Activated CD8-positive, alpha-beta T cell treated with anti-CD3 and anti-CD28 coated beads, Interleukin-2, amount 10 ng/mL, durations not matched to agents 7 days and 5 days (primary cell): ENCODE measurements at regions of chr6 and their contacts with region 1.

Region 1: DNA sequence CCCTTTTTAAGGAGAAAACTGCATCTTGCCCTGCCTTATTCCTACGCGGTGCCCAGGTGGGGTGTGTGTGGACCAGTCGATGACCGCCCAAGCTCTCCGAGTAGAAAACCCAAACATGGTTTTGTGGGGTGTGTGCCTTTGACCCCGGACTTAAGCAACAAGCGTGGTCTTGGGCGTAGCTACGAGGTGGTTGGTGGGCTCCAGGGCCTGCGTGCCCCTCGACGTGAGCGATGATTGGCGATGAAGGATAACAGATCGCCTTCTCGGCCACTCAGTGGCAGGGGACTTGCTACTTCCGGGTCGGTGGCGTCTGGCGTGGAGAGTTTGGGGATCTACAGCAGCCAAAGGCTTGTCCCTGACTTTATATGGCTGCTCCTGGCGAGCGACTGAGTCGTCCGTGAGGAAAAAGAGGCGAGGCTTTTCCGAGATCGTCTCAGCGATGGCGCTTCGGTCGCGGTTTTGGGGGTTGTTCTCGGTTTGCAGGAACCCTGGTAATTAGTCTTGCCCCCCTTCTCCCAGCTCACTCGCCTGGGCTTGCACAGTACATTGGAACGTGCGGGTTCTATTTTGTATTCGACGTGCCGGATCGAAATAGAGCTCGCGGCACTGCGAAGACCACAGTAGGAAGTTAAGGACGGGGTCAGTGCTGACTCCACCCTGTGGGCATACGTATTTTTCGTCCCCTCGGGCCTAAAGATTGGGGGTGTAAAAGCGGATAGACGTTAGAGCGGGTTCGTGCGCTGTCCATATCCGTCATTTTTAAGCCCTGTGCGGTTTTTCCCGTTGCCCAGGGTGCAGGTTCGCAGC is at the start of gene MRPL18:
- DNase-seq: peak; percentile 96
- ATAC-seq: peak; percentile 85
- H3K4me3 Mint-ChIP-seq: peak within 1 kb of the TSS; percentile 93
- H3K27ac Mint-ChIP-seq: peak within 1 kb of the TSS; percentile 96
- H3K4me1 Mint-ChIP-seq: peaks cover 59% of the 10 kb centered on the region
- H3K27me3 Mint-ChIP-seq: no peaks in the 10 kb centered on the region
- total RNA-seq, gene MRPL18: 85.4 to 91.3 TPM

Region 2: DNA sequence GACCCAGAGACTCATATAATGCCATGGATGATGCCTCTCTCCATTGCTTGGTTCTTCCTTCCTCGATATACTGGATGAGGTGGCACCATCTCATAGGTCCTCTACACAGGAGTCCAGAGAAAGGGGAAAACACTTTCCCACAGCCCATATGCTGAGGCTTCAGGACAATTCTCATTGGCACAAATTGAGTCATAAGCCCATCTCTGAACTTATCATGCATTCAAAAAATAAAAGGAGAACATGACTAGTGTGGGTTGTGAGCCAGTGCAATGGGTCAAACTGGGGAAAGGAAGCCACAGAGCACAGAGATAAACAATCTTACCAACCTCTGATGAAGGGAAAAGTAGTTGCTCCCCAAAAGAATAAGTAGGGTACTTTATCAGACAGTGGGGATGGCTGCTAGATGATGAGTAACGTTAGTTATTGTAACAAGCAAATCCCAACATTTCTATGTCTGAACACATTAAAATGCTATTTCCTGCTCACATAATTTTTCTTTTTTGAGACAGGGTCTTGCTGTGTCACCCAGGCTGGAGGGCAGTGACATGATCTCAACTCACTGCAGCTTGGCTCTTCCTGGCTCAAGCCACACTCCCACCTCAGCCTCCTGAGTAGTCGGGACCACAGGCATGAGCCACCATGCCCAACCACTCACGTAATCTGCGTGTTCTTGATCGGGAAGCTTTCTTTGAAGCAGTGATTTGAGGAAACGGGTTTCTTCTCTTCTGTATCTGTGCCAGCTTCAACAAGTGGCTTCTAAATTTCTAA is 124.3 kb before region 1 on chr6:
- CTCF ChIA-PET with region 1: no interaction called
- POLR2A ChIA-PET with region 1: no interaction called
- DNase-seq: no peak
- ATAC-seq: no peak
- H3K4me3 Mint-ChIP-seq: no peak overlapping the region
- H3K27ac Mint-ChIP-seq: no peak overlapping the region
- H3K4me1 Mint-ChIP-seq: no peaks in the 10 kb centered on the region
- H3K27me3 Mint-ChIP-seq: no peaks in the 10 kb centered on the region

Region 3: GRCh38 chr6:159693128-159693893 is 97.0 kb before region 1 on chr6 and contains the start of gene SOD2:
- CTCF ChIA-PET with region 1: interaction called, 21 read pairs
- POLR2A ChIA-PET with region 1: interaction called, 26 read pairs
- DNase-seq: peak; percentile 85
- ATAC-seq: peak; percentile 81
- H3K4me3 Mint-ChIP-seq: peak within 1 kb of the TSS; percentile 94
- H3K27ac Mint-ChIP-seq: peak within 1 kb of the TSS; percentile 95
- H3K4me1 Mint-ChIP-seq: peaks cover 37% of the 10 kb centered on the region
- H3K27me3 Mint-ChIP-seq: no peaks in the 10 kb centered on the region
- total RNA-seq, gene SOD2: 59.1 to 66.4 TPM

Region 4: GRCh38 chr6:159726918-159727716 is 63.2 kb before region 1 on chr6 and contains the start of gene WTAP:
- CTCF ChIA-PET with region 1: interaction called, 5 read pairs
- POLR2A ChIA-PET with region 1: interaction called, 30 read pairs
- DNase-seq: peak; percentile 98
- ATAC-seq: peak; percentile 82
- H3K4me3 Mint-ChIP-seq: peak within 1 kb of the TSS; percentile 93
- H3K27ac Mint-ChIP-seq: peak within 1 kb of the TSS; percentile 98
- H3K4me1 Mint-ChIP-seq: peaks cover 51% of the 10 kb centered on the region
- H3K27me3 Mint-ChIP-seq: no peaks in the 10 kb centered on the region
- total RNA-seq, gene WTAP: 111 to 113 TPM

Region 5: DNA sequence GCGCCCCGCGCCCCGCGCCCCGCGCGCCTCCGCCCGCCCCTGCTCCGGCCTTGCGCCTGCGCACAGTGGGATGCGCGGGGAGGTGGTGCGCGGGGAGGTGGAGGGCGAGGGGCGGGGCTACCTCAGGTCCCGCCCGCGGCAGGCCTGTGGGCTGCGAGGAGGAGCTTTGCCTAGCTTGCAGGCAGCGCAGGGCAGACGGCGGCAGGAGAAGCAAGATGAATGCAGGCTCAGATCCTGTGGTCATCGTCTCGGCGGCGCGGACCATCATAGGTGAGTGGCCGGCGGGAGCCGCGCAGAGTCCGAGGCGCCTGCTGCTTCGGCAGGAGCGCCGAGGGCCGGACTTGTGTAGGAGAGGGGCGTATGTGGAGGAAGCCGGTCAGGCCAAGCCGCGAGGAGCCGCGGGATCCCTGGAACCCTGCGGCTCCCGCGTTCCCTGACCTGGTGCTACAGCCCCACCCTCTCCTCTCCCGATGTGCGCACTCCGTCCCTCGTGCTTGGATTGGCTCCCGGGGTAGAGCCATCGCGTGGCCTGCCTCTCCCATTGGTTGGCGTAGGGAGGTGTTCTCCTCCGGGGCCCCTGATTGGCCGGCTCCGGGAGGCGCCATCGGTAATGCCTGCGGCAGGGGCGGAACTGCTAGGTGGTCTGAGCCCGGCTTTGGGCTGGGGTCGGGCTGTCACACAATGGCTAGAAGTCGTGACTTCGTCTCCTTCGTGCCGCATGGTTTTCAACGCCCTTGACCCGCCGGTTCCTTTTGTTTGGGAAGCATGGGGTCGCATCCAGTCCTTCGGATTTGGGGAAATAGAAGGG is 28.3 kb before region 1 on chr6 and contains the start of gene ACAT2:
- CTCF ChIA-PET with region 1: interaction called, 3 read pairs
- POLR2A ChIA-PET with region 1: interaction called, 33 read pairs
- DNase-seq: peak; percentile 95
- ATAC-seq: peak; percentile 97
- H3K4me3 Mint-ChIP-seq: peak within 1 kb of the TSS; percentile 94
- H3K27ac Mint-ChIP-seq: peak within 1 kb of the TSS; percentile 96
- H3K4me1 Mint-ChIP-seq: peaks cover 39% of the 10 kb centered on the region
- H3K27me3 Mint-ChIP-seq: no peaks in the 10 kb centered on the region
- total RNA-seq, gene ACAT2: 84.4 to 89.2 TPM

Region 6: DNA sequence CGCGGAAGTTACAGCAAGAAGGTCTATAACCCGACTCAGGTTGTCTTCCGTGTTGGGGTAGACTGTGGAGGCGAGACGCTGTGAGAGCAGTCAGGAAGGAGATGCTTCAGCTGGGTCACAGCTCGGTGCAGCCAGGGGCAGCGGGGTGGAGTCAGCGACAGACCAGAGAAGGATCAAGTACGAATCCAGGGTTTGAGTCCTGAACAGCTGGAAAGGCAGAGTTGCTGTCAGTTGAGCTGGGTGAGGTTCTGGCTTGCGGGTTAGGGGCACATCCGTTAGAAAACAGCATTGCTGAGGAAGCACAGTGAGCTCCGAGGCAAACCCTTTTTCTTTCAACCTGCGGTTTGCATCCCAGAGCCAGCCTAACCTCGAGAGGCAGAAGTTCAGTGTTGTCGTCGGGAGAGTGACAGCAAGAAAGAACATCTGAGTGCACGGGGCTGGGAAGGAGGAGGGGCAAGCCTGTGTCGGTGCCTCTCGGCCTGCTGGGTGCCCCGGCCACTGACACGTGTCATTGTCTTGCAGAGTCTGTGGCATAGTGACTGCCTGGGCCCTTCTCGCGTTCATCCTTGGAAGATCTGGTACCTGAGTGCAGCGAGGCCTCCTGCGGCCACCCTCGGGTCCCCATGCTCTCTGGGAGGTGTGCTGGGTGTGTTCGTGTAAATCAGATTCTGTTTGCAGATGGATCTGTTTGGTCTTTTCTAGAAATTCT is 29.7 kb after region 1 on chr6:
- CTCF ChIA-PET with region 1: interaction called, 3 read pairs
- POLR2A ChIA-PET with region 1: interaction called, 24 read pairs
- DNase-seq: peak; percentile 72
- ATAC-seq: peak; percentile 85
- H3K4me3 Mint-ChIP-seq: peak overlapping the region; percentile 72
- H3K27ac Mint-ChIP-seq: peak overlapping the region; percentile 95
- H3K4me1 Mint-ChIP-seq: peaks cover 23% of the 10 kb centered on the region
- H3K27me3 Mint-ChIP-seq: no peaks in the 10 kb centered on the region

Region 7: GRCh38 chr6:159852877-159853276 is 62.5 kb after region 1 on chr6:
- CTCF ChIA-PET with region 1: interaction called, 11 read pairs
- POLR2A ChIA-PET with region 1: interaction called, 3 read pairs
- DNase-seq: peak; percentile 44
- ATAC-seq: peak; percentile 57
- H3K4me3 Mint-ChIP-seq: no peak overlapping the region
- H3K27ac Mint-ChIP-seq: no peak overlapping the region
- H3K4me1 Mint-ChIP-seq: peaks cover 3% of the 10 kb centered on the region
- H3K27me3 Mint-ChIP-seq: peaks cover 19% of the 10 kb centered on the region

Region 8: DNA sequence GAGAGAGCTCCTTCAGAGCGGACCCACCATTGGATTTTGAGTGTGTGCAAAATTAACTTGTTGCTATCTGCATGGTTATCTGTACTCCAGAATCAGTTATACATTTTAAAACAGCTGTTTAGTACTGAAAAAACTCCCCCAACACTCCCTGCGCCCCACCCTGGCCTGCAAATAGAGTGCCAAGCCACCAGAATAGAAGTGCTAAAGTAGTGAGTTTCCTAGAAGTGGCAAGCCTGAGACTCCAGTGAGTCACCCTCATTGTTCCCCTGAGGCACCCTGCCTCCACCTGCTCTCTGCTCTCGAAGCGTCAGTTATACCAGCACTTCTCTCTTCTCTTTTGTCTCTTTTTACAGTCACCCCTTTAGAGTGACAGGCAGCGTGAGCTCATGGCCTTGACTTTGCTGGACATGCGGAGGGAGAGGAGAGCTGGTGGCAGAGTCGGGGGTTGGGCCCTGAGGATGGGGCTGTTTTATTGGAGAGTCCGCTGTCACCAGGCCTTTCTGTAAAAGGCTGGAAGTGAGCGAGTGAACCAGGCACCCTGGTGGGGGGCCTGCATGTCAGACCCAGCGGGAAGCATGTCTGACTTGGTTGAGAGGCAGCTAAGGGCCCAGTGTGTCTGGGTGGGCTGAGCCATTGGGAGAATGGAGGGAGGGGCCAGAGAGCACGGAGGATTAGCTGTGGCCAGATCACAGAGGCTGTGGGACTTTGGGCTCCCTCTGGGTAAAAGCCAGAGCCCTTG is 189.0 kb after region 1 on chr6:
- CTCF ChIA-PET with region 1: no interaction called
- POLR2A ChIA-PET with region 1: interaction called, 13 read pairs
- DNase-seq: peak; percentile 79
- ATAC-seq: peak; percentile 74
- H3K4me3 Mint-ChIP-seq: peak overlapping the region; percentile 57
- H3K27ac Mint-ChIP-seq: peak overlapping the region; percentile 84
- H3K4me1 Mint-ChIP-seq: peaks cover 93% of the 10 kb centered on the region
- H3K27me3 Mint-ChIP-seq: no peaks in the 10 kb centered on the region